ENCODE measurements at regions of chr6 and their contacts with region 1.

Region 1: GRCh38 chr6:31597006-31597405 is 4.2 kb upstream of the NCR3 start:
- DNase-seq: no peak
- H3K4me3 ChIP-seq: no peak overlapping the region
- H3K27ac ChIP-seq: no peak overlapping the region
- H3K4me1 ChIP-seq: no peaks in the 10 kb centered on the region
- H3K27me3 ChIP-seq: no peaks in the 10 kb centered on the region
- CTCF ChIP-seq: peak in 1 of 3 experiments; percentile 39
- POLR2A ChIP-seq: no peak

Region 2: GRCh38 chr6:31345026-31345730 is 251.8 kb before region 1 on chr6:
- intact Hi-C with region 1: no loop called
- DNase-seq: no peak
- H3K4me3 ChIP-seq: no peak overlapping the region
- H3K27ac ChIP-seq: no peak overlapping the region
- H3K4me1 ChIP-seq: no peaks in the 10 kb centered on the region
- H3K27me3 ChIP-seq: no peaks in the 10 kb centered on the region
- CTCF ChIP-seq: no peak
- POLR2A ChIP-seq: no peak

Region 3: GRCh38 chr6:31546962-31547726 is 49.9 kb before region 1 on chr6 and contains the start of gene NFKBIL1:
- intact Hi-C with region 1: loop called (anchors 2 kb)
- DNase-seq: peak in 1 of 2 donors; percentile 97
- H3K4me3 ChIP-seq: peak within 1 kb of the TSS; percentile 36 to 46
- H3K27ac ChIP-seq: peak within 1 kb of the TSS; percentile 83
- H3K4me1 ChIP-seq: peaks cover 40% of the 10 kb centered on the region
- H3K27me3 ChIP-seq: no peaks in the 10 kb centered on the region
- CTCF ChIP-seq: peak in 1 of 3 experiments; percentile 19
- POLR2A ChIP-seq: no peak
- total RNA-seq, gene NFKBIL1: 14.2 TPM

Measured in vagina (tissue), 2 donors.